ENCODE measurements at regions of chr16 and their contacts with region 1.

Region 1: DNA sequence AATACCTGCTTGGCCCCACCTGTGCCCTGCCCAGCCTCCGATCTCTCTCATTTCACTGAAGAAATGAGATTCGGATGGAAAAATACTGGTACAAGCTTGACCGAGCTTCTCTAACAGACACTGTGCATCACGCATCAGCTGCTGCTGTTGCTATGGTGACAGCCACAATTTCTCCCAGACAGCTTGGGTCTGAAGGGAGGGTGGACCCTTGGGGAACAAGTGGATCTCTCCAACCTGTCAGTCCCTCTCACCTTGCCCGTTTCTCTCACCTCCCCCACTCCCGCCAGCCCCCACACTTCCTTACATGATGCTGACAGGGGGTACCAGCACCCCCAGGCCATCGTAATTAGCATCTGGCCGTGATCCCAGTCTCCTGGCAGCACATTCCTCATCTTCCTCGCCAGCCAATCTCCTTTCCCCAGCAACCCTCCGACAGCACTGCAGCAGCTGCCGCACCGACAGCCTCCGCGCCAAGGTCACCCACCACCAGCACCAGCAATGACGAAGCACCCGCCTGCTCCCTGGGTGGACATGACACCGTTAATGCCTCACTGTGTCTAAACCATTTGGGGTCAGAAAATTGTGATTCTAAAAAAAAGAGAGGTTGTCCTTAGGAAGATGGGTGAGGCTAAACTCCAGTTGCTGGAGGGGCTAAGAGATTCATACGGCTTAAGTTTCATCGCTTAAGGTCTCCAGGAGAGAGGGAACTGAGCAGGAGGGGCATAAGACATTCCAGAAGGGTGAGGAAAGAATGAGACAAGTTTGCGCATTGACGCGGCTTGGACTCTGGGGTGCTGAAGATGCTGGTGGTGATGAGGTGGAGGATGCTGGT is 58.6 kb upstream of the TNRC6A start:
- DNase-seq: peak; percentile 64 to 92
- H3K4me3 ChIP-seq: peak overlapping the region; percentile 13 to 39
- H3K27ac ChIP-seq: peak overlapping the region; percentile 91 to 93
- H3K4me1 ChIP-seq: peaks cover 9 to 23% of the 10 kb centered on the region in 2 donors
- H3K27me3 ChIP-seq: no peaks in the 10 kb centered on the region
- CTCF ChIP-seq: no peak

Region 2: DNA sequence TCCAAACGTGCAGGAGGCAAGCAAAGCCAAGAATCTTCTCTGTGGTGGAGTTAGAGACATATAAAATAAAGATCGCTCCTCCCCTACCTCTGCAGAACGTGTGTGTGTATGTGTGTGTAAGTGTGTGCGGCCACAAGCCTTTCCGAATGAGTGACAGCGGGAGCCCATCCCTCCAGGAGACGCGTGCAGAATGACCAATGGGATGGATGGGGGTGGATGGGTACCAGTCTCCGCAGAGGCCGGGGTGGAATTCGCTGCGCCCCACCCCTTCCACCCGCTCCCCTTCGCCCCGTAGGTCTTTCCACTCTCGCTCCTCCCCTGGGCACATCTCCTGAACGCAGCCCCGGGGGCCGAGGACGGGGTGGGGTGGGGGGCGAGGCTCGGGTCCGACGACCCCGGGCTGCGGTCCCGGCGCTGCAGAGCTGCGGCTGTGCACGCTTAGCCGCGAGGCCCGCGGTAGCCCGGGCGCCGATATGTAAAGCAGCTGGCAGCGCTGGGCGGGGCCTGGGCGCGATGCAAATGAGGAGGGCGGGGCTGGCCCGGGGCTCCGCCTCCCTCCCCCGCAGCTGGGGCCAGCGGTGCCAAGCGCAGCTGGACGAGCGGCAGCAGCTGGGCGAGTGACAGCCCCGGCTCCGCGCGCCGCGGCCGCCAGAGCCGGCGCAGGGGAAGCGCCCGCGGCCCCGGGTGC is 835.3 kb before region 1 on chr16 and contains the start of gene PRKCB:
- intact Hi-C with region 1: no loop called
- DNase-seq: peak; percentile 31 to 83
- H3K4me3 ChIP-seq: peak within 1 kb of the TSS; percentile 40 to 66
- H3K27ac ChIP-seq: no peak within 1 kb of the TSS
- H3K4me1 ChIP-seq: no peaks in the 10 kb centered on the region
- H3K27me3 ChIP-seq: no peaks in the 10 kb centered on the region
- CTCF ChIP-seq: no peak
- total RNA-seq, gene PRKCB: 1.2 TPM

Region 3: GRCh38 chr16:24430945-24431760 is 239.7 kb before region 1 on chr16:
- intact Hi-C with region 1: no loop called
- DNase-seq: no peak
- H3K4me3 ChIP-seq: no peak overlapping the region
- H3K27ac ChIP-seq: no peak overlapping the region
- H3K4me1 ChIP-seq: no peaks in the 10 kb centered on the region
- H3K27me3 ChIP-seq: no peaks in the 10 kb centered on the region
- CTCF ChIP-seq: no peak

Region 4: GRCh38 chr16:24516900-24517669 is 153.8 kb before region 1 on chr16:
- intact Hi-C with region 1: no loop called
- DNase-seq: peak; percentile 23 to 90
- H3K4me3 ChIP-seq: peak overlapping the region; percentile 38 to 51
- H3K27ac ChIP-seq: no peak overlapping the region
- H3K4me1 ChIP-seq: peaks cover 0 to 4% of the 10 kb centered on the region in 2 donors
- H3K27me3 ChIP-seq: no peaks in the 10 kb centered on the region
- CTCF ChIP-seq: peak; percentile 59 to 90 (median 87)

Region 5: GRCh38 chr16:24539291-24539849 is 131.5 kb before region 1 on chr16 and contains the start of gene RBBP6:
- intact Hi-C with region 1: loop called (anchors 10 kb)
- DNase-seq: peak; percentile 84 to 97
- H3K4me3 ChIP-seq: peak within 1 kb of the TSS; percentile 80 to 100
- H3K27ac ChIP-seq: peak within 1 kb of the TSS; percentile 98 to 100
- H3K4me1 ChIP-seq: peaks cover 0 to 14% of the 10 kb centered on the region in 2 donors
- H3K27me3 ChIP-seq: no peaks in the 10 kb centered on the region
- CTCF ChIP-seq: peak; percentile 24 to 46 (median 30)
- total RNA-seq, gene RBBP6: 96.1 TPM

Region 6: DNA sequence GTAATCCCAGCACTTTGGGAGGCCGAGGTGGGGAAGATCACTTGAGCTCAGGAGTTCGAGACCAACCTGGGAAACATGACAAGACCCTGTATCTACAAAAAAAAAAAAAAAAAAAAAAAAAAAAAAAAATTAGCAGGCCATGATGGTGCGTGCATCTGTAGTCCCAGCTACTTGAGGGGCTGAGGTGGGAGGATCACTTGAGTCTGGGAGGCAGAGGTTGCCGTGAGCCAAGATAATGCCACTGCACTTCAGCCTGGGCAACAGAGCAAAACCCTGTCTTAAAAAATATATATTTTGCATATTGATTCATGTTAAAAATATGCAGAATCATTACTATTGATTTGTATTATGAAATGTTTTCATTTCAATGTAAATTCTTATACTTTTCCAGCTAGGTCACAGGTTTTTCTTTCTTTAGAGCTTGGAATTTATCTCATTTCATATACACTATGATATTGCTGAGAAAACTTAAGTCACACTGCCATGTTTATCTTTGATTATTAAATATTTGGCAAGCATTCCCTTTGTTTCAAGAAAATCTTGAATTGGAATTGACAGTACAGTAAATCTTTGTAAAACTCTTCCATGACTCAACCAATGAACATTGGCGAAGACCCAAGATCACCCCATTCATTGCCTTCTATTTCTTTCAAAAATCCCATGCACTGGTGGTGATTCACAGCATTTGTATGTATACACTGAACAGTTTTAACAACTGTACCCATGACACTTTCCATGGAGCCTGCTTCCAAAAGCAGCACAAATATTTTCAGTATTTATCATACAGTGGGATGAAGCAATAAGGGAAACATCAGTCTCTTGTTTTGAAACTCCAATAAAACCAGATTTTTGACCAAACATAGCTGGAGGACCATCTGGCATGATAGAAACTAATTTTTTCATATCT is 24.8 kb before region 1 on chr16:
- intact Hi-C with region 1: loop called (anchors 1 kb)
- DNase-seq: peak in 1 of 2 donors; percentile 86
- H3K4me3 ChIP-seq: no peak overlapping the region
- H3K27ac ChIP-seq: peak overlapping the region; percentile 30 to 60
- H3K4me1 ChIP-seq: peaks cover 0 to 10% of the 10 kb centered on the region in 2 donors
- H3K27me3 ChIP-seq: no peaks in the 10 kb centered on the region
- CTCF ChIP-seq: no peak

Region 7: DNA sequence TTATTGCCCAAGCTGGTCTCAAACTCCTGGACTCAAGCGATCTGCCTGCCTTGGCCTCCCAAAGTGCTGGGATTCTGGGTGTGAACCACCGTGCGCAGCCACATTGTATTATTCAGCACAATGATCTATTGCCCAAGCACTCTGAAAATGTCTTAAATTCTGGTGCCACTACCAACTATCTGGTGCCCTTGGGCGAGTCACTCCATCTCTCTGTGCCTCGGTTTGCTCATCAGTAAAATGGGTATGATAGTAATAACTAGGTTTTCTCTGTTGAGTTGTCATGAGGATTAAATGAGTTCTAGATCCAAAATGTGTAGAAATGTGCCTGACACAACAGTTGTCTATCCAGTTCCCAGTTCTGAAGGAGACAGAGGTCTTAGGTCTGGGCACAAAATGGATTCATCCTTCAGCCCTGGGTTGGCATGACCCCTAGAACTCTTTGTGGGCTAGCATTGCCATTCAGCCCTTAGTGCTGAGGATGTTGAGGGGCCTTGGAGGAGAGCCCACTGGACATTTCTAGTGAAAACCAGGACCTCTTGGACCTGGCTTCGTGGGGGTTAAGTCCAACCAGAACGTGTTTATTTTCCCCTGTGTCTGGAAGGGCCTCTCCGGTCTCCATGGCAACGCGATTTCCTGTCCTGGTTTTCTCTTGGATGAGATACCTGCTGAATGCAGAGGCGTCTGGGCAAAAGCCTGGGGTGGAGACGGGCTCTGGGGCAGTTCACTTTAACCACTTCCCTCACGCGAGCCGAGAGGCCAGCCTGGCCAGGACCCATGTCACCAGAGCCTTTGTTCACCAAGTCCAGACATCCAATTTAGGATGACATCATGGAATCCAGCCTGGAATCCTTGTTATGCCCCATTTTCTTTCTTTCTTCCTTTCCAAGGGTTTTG is 14.9 kb after region 1 on chr16:
- intact Hi-C with region 1: loop called (anchors 1 kb)
- DNase-seq: peak; percentile 34 to 88
- H3K4me3 ChIP-seq: peak overlapping the region; percentile 3 to 23
- H3K27ac ChIP-seq: peak overlapping the region; percentile 66 to 70
- H3K4me1 ChIP-seq: peaks cover 7 to 14% of the 10 kb centered on the region in 2 donors
- H3K27me3 ChIP-seq: no peaks in the 10 kb centered on the region
- CTCF ChIP-seq: no peak

Region 8: DNA sequence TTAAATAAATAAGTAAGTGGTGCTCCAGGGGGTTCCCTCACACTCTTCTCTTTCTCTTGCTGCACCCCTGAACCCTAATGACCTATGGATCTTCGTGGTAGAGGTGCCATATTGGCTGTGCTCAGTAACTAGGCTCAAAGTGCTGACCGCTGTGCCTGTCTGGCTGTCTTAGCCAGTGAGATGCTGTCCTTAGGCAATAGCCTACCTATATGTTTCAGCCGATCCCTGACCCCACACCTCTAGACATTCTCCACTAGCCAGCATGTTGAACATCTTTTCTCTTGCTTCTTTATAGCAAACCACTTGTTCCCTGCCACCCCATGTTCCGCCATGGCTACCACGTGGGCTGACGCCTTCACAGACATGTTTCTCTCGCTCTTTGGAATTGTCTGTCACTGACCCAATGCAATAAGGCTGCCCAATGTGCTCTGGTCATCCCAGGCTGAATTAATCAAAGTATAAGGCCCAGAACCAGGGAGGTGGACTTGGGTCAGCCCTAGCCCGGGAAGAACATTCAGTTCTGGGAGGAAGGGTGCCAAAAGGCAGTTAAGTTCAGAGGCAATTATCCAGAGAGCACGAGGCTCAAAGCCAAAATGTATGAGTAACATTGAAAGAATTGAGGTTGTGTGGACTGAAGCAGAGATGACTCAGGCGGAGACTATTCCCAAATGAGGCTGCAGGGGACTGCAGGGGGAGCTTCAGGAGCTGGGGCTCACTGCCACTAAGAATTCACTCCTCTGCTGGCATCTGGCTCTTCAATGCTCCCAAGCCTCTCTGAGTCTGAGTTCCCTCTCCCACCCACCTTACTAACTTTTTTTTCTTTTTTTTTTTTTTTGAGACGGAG is 29.9 kb after region 1 on chr16:
- intact Hi-C with region 1: loop called (anchors 1 kb)
- DNase-seq: peak; percentile 65 to 94
- H3K4me3 ChIP-seq: no peak overlapping the region
- H3K27ac ChIP-seq: peak overlapping the region; percentile 82 to 90
- H3K4me1 ChIP-seq: peaks cover 12 to 24% of the 10 kb centered on the region in 2 donors
- H3K27me3 ChIP-seq: no peaks in the 10 kb centered on the region
- CTCF ChIP-seq: peak; percentile 10 to 33 (median 27)

Region 9: DNA sequence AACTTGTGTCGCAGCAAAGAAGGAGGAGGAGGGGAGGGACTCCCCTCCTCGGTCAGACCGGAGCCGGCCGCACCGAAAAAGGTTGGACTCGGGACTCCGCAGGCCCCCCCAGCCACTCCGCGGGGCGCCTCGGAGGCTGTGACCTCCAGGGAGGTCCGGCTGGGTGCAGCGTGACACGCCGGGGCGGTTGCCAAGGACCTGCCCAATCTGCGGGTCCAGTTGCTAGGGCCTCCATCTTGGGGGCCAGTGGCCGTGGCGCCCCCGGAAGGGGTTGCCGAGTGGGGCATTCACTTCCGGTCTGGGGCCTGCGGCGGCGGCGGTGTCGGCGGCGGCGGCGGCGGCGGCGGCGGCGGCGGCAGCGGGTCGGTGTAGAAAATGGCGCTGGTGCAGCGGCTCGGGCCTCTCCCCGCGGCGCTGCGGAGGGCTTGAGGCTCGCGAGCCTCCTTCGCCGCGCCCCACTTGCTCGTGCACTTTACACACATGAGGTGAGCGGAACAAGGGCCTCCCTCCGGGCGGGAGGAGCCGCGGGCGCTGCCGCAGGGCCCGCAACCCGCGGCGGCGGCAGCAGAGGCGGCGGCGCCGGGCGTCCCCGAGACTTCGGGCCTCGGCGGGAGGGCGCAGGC is 58.6 kb after region 1 on chr16 and contains the start of gene TNRC6A:
- intact Hi-C with region 1: loop called (anchors 2 kb)
- DNase-seq: peak; percentile 64 to 95
- H3K4me3 ChIP-seq: peak within 1 kb of the TSS; percentile 86 to 93
- H3K27ac ChIP-seq: peak within 1 kb of the TSS; percentile 97 to 98
- H3K4me1 ChIP-seq: peaks cover 6 to 25% of the 10 kb centered on the region in 2 donors
- H3K27me3 ChIP-seq: no peaks in the 10 kb centered on the region
- CTCF ChIP-seq: no peak
- total RNA-seq, gene TNRC6A: 36.7 TPM